Cardiac septum (tissue), 1 donor: ENCODE measurements at regions of chr3 and their contacts with region 1.

Region 1: DNA sequence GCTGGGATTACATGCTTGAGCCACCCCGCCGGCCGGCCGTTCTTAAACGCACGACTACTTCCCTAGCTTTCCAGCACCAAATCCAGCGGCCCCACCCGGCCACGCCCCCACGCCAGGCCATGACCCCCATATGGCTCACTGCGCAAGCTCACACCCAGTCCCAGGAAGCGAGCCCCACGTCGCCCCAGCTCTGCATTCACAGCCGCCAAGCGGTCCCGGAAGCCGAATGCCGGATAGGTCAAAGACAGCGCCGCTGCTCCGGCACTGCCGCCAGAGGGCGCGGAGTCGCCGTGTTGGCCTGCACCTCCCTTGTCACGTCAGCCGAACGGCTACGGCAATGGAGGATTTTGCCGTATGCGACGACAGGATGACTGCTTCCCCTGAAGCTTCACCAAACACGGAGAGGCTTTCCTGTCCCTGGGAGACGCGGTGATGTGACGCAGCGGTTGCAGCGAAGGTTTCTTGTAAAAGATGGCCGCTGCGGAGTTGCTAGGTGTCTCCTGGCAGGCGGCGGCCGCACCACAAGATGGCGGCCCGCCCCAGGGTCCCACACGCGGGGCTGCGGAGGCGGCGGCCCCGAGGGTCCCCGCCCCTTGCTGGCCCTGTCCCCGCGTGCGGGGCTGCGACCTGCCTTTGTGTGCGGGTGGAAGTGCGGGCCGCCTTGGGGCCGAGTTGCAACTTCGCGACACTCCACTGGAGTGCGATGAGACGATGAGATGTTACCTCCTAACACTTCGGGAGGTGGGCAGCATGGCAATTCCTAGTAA is 30.2 kb upstream of the RPN1 start:
- DNase-seq: peak; percentile 100

Region 2: DNA sequence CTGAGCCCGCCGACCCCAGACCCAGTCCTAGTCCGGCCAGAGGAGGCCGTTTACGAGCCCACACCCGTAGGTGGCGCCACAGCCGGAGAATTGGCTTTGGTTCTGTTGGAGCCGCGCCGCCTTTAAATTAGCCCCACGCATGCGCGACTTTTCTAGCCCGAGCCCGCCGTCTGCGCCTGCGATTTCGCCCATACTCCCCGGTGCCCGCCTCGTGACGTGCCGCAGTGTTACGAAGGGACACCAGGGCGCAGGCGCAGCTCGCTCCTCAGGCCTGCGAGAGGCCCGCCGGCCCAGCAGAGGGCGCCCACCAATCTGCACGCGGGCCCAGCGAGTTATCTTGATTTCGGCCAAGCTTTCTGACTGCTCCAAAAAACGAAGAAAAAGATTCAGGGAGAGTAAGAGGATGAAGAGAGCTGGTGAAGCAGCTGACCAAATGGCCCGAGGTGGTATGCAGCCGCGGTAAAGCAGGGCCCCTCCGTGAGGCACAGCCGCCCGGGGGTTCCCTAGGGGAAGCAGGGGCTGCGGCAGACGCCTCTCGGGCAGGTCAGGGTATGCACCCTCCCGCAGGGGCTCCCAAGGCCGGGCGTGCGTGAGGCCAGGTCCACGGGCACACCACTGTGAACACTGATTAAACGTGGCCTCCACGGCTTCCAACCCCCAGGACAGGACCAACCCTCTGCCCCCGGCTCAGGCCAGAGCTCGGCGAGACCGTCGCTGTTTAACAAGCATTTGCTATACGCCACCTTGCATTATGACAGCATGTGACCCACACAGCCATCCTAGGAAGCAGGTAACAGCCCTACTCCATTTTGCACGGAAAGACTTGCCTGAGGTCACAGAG is 63.0 kb before region 1 on chr3:
- intact Hi-C with region 1: loop called (anchors 5 kb)
- DNase-seq: peak; percentile 99

Region 3: DNA sequence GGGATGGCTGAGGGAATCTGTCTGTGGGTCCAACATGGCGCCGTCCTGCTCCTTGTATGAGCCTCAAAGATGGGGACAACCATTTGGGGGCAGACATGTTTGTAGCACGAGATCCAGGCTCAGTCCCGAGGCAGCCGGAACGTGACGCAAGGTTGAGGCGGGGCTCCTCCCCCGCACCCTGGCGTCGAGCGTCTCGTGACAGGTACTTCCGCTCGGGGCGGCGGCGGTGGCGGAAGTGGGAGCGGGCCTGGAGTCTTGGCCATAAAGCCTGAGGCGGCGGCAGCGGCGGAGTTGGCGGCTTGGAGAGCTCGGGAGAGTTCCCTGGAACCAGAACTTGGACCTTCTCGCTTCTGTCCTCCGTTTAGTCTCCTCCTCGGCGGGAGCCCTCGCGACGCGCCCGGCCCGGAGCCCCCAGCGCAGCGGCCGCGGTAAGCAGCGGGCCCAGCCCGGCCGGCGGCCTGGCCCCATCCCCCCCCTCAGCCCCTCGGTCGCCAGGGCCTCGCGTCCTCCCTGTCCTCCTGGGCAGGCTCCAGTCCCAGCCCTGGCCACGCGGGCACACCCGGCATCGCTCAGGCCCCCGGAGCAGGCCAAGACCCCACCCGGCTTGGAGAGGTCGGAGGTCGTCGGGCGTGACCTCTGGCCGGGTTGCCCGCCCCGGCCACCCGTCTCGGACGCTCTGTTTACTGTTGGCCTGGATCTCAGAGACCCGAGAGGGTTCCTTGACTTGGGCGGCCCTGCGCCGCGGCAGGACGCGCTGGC is 45.3 kb after region 1 on chr3 and contains the start of gene RAB7A:
- intact Hi-C with region 1: loop called (anchors 1 kb)
- DNase-seq: peak; percentile 99
- total RNA-seq, gene RAB7A: 215 TPM

Region 4: GRCh38 chr3:128794770-128795649 is 114.2 kb after region 1 on chr3:
- intact Hi-C with region 1: loop called (anchors 2 kb)
- DNase-seq: no peak

Region 5: DNA sequence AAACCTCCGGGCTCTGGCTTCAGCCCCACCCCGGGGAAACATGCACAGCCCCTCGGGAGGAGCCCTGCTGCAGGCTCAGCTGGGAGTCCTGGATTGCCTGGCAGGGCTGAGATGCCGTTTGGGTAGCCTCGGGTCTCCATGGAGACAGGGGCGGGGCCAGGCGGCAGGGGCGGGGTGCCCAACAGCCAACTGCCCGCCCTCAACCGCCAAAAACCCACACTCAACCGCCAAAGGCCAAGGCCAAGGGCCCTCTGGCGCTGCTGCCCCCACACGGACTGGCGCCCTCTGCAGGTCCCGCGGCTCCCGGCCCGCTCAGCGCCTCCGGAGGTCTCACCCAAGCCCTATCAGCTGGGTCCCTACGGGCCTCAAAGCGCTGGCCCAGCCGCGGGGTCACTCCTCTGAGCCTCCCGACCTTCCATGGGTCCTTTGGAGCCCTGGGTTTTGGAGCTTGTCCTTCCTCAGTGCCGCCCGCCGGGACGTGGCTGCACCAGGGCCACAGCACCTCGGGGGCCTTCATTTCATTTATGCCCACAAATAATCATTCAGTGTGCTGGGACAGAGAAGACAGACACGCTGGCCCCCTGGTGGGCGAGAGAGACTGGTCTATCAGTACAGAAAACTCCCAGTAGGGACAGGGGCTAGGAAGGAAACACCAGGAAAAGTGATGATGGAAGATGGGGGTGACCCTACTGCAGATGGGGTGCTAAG is 165.1 kb after region 1 on chr3:
- intact Hi-C with region 1: loop called (anchors 1 kb)
- DNase-seq: peak; percentile 94

Region 6: GRCh38 chr3:128879125-128879969 is 198.6 kb after region 1 on chr3 and contains the start of gene ACAD9:
- intact Hi-C with region 1: loop called (anchors 10 kb)
- DNase-seq: peak; percentile 98
- total RNA-seq, gene ACAD9: 29.3 TPM